Calu3 (cell line): ENCODE measurements at regions of chr3 and their contacts with region 1.

Region 1: GRCh38 chr3:37453393-37454389 is 279.3 kb upstream of the LRRFIP2 start:
- DNase-seq: no peak
- H3K4me3 Mint-ChIP-seq: no peak overlapping the region
- H3K27ac Mint-ChIP-seq: no peak overlapping the region
- H3K4me1 Mint-ChIP-seq: peaks cover 5% of the 10 kb centered on the region
- H3K27me3 Mint-ChIP-seq: peaks cover 90% of the 10 kb centered on the region
- CTCF ChIP-seq: no peak

Region 2: DNA sequence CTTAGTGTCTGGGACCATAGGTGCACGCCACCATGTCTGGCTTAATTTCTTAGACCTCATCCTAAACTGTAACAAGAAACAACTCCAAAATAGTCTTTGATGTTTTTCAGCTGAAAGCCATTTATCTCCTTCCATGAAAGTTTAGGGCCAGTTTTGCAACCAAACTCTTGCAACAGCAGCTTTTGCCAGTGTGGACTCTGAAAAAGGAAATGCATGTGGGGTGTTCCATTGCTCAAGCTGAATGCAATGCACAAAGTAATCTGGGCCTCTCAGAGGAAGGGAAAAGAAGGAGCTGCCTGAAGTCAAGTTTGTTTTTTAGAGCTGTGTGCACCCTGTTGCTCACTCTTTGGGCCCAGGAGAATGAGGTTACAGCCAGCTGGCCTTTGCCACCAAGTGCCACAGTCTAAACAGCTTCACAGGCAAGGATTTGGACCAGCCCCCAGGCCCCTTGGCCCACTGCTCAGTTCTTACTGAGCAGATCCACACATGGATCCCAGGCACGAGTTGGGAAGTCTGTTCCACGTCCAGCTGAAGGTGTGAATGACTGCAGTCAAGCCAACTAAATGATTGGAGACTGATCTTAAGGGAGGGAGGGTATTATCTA is 67.0 kb before region 1 on chr3:
- CTCF ChIA-PET with region 1: no interaction called
- intact Hi-C with region 1: no loop called
- DNase-seq: no peak
- H3K4me3 Mint-ChIP-seq: no peak overlapping the region
- H3K27ac Mint-ChIP-seq: no peak overlapping the region
- H3K4me1 Mint-ChIP-seq: no peaks in the 10 kb centered on the region
- H3K27me3 Mint-ChIP-seq: no peaks in the 10 kb centered on the region
- CTCF ChIP-seq: no peak

Region 3: DNA sequence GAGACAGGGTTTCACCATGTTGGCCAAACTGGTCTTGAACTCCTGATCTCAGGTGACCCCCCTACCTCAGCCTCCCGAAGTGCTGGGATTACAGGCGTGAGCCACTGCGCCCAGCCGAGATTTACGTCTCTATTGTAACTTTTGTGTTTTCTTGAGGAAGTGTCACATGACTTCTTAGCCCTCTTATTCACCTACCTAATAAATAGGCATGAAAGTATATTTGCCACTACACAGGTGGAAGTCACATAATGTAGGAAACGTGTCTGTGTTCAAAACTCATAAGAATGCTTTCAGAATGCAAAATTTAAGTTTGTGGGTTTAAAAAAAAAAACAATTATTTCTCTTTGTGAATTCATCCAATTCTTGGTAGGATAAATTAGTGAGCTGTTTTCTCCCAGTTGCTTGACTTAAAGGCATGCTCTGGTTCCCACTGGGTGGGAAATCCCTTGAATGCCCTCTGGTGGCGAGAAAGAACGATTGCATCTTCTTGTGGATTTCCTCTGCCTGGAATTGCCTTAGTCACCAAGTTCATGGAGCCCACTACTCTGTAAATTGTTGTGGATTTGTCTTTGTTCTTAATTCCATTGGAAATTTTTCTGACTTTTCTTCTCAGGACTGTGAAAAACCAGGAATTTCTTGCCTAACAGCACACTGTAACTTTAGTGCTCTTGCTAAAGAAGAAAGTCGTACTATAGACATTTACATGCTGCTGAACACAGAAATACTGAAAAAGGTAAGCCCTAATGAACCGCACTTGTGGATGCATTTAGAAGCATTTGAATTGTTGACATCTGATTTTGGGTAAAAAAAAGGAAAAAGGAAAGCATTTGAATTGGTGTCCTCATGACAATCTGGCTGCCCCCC is 325.8 kb after region 1 on chr3:
- CTCF ChIA-PET with region 1: interaction called, 5 read pairs
- intact Hi-C with region 1: loop called (anchors 2 kb)
- DNase-seq: peak; percentile 31
- H3K4me3 Mint-ChIP-seq: no peak overlapping the region
- H3K27ac Mint-ChIP-seq: no peak overlapping the region
- H3K4me1 Mint-ChIP-seq: no peaks in the 10 kb centered on the region
- H3K27me3 Mint-ChIP-seq: peaks cover 47% of the 10 kb centered on the region
- CTCF ChIP-seq: peak; percentile 70